Caco-2 (cell line): ENCODE measurements at regions of chr20 and their contacts with region 1.

Region 1: DNA sequence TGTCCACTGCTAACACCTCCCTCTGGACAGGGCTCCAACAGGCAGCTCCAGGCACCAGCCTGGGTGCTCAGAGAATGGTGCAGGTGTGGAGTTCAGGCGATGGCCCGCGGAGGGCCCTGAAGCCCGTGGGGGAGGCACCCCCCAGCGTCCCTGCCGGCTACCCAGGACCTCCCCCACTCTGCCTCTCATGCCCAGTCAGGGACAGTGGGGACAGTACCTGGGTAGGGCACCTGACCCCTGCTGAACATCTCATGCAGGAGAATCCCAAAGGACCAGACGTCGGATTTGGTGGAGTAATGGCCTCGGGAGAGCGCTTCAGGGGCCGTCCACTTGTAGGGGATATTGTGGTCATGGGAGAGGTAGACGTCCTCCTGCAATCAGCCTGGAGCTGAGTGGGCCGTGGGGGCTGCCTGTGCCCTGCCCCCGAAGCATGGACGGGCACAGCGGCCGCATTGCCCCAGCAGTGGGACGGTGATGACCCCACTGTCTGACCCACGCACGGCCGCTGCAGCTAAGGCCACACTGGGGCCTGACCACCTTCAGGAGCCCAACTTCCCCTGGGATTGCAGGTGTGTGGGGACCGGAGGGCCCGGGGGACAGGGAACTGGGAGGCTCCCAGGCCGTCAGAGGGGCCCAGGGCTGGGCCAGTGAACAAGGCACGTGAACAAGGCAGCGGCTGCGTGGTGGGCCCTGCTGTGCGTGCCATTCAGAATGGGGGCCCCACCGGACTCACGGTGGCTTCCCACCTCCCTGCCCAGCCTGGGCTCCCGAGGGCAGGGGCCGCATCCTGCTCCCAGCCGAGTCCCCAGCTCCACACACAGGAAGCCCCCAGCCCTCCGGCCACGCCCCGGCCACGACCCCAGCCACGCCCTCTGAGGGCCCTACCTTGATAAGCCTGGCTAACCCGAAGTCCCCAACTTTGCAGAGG is 7.1 kb downstream of the PTK6 start:
- DNase-seq: no peak
- H3K4me3 ChIP-seq: no peak overlapping the region
- H3K4me3 Mint-ChIP-seq: no peak overlapping the region
- H3K27ac Mint-ChIP-seq: no peak overlapping the region
- H3K4me1 ChIP-seq: peaks cover 27% of the 10 kb centered on the region
- H3K4me1 Mint-ChIP-seq: no peaks in the 10 kb centered on the region
- H3K27me3 ChIP-seq: no peaks in the 10 kb centered on the region
- H3K27me3 Mint-ChIP-seq: no peaks in the 10 kb centered on the region
- CTCF ChIP-seq: no peak

Region 2: DNA sequence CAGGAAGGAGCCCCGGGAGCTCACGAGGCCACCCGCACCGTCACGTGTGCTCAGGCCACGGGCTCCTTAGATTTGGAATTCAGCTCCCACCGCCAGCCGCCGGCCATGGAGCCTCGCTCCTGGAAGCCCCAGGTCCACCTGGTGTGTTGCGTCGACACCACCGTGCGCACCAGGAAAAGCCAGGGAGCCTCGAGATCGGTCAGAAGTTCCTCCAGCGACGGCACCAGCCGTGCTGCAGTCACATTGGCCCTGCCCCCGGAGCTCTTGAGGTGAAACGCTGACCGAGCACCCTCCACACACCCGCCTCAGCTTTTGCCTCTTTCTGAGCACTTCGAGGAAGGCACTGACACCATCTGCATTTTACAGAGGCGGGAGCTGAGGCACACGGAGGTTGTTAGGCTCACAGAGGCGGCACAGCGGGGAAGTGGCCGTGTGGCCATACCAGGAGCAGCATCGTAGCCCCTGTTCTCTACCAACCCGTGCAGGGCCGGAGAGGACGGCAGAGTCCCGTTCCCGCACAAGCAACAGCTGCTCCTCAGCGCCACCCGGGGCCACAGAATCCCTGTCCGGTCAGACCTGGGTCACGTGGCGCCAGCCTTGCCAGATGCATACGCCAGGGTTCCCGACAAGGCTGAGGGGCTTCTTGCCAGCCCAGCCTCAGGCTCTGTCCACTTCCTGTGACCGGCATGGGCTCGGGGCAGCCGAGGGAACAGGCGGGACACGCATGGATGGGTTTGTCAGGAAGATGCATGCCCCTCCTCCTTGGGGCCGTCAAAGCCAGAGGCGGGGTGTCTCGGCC is 283.4 kb before region 1 on chr20:
- CTCF ChIA-PET with region 1: no interaction called
- POLR2A ChIA-PET with region 1: no interaction called
- intact Hi-C with region 1: no loop called
- DNase-seq: no peak
- H3K4me3 ChIP-seq: no peak overlapping the region
- H3K4me3 Mint-ChIP-seq: no peak overlapping the region
- H3K27ac Mint-ChIP-seq: no peak overlapping the region
- H3K4me1 ChIP-seq: peaks cover 42% of the 10 kb centered on the region
- H3K4me1 Mint-ChIP-seq: peaks cover 24% of the 10 kb centered on the region
- H3K27me3 ChIP-seq: no peaks in the 10 kb centered on the region
- H3K27me3 Mint-ChIP-seq: no peaks in the 10 kb centered on the region
- CTCF ChIP-seq: no peak

Region 3: DNA sequence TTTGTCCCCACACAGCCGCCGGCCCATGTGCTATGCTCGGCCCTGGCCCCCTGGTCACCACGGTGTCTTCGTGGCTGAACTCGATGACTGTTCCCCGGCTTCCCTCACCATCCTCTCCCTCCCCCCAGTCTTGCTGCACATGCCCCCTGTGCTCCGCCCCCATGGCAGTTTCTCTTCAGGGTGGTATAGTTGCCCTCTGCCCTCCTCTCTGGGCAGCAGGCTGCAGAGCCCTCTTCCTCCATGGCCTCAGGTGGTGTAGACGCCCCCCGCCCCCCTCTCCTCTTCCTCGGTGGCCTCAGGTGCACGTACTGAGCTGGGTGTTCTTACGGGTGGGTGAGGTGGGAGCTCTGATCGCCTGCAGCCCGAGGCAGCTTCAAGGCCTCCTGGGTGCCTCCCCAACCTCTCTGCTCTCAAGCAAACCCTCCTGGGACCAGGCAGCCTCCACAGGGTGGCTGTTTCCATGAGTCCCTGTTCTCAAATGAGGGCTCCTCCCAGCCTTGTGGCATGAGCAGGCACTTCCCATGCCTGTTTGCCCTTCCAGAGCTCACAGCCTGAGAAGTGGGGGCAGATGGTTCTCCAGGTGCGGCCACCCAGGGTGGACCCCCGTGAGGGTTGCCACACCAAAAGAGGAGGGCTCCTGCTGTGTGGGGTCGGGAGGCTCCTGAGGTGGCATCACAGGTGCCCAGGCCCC is 212.4 kb before region 1 on chr20:
- CTCF ChIA-PET with region 1: no interaction called
- POLR2A ChIA-PET with region 1: interaction called, 10 read pairs
- intact Hi-C with region 1: no loop called
- DNase-seq: peak in 1 of 2 experiments; percentile 56
- H3K4me3 ChIP-seq: no peak overlapping the region
- H3K4me3 Mint-ChIP-seq: no peak overlapping the region
- H3K27ac Mint-ChIP-seq: no peak overlapping the region
- H3K4me1 ChIP-seq: peaks cover 5% of the 10 kb centered on the region; the same call in 1 of the 2 replicates
- H3K4me1 Mint-ChIP-seq: no peaks in the 10 kb centered on the region
- H3K27me3 ChIP-seq: peaks cover 1% of the 10 kb centered on the region; the same call in 1 of the 2 replicates
- H3K27me3 Mint-ChIP-seq: no peaks in the 10 kb centered on the region
- CTCF ChIP-seq: no peak

Region 4: GRCh38 chr20:63402184-63402859 is 127.8 kb before region 1 on chr20:
- CTCF ChIA-PET with region 1: no interaction called
- POLR2A ChIA-PET with region 1: no interaction called
- intact Hi-C with region 1: no loop called
- DNase-seq: no peak
- H3K4me3 ChIP-seq: no peak overlapping the region
- H3K4me3 Mint-ChIP-seq: no peak overlapping the region
- H3K27ac Mint-ChIP-seq: no peak overlapping the region
- H3K4me1 ChIP-seq: no peaks in the 10 kb centered on the region
- H3K4me1 Mint-ChIP-seq: no peaks in the 10 kb centered on the region
- H3K27me3 ChIP-seq: peaks cover 5% of the 10 kb centered on the region
- H3K27me3 Mint-ChIP-seq: peaks cover 38% of the 10 kb centered on the region
- CTCF ChIP-seq: no peak

Region 5: DNA sequence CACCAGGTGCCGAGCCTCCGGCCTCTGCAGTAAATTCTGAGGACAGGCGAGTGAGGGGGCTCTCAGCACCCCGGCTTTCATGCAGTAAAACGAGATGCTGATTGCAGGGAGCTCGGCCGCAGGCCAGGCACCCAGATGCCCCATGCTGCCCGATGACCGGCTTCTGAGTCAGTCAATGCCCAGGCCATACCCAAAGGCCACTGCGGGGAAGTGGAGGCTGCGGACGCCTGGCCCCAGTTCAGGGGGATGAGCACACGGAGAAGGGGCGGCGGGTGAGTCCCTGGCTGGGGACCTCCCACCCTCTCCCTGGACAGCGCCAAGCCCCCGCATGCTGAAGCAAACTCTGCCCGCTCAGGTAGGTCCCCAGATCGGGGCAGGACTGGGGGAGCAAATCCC is 18.0 kb after region 1 on chr20:
- CTCF ChIA-PET with region 1: no interaction called
- POLR2A ChIA-PET with region 1: no interaction called
- intact Hi-C with region 1: no loop called
- DNase-seq: no peak
- H3K4me3 ChIP-seq: no peak overlapping the region
- H3K4me3 Mint-ChIP-seq: no peak overlapping the region
- H3K27ac Mint-ChIP-seq: no peak overlapping the region
- H3K4me1 ChIP-seq: peaks cover 28% of the 10 kb centered on the region
- H3K4me1 Mint-ChIP-seq: peaks cover 22% of the 10 kb centered on the region
- H3K27me3 ChIP-seq: no peaks in the 10 kb centered on the region
- H3K27me3 Mint-ChIP-seq: no peaks in the 10 kb centered on the region
- CTCF ChIP-seq: no peak

Region 6: DNA sequence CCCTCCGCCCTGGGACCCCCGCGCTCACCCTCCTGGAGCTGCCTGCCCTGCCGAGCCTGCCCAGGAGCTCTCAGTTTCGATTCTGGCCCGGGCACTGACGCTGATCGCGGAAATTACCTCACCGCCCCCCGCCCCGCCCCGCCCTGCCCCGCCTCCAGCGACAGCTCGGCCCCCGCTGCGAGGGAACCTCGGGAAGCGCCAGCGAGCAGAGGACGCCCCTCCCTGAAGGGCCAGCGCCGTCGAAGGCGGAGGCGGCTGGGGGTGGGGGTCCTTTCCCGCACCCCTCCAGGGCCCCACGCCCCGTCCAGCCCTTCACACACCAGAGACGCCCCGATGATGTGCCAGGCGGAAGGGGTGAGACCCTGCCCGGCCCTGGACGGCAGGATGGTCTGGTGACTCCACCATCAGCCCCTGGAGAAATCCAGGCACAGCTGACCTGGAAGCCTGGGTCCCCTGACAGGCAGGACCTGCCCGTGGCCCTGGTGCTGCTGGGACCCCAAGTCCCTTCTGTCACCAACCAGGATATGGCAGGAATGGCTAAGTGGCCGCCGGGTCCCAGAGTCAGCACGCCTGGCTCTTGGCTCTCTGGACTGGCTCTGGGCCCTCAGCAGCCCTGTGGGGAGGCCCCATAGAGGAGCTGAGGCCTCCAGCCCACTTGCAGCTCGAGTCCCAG is 44.2 kb after region 1 on chr20 and contains the start of gene HELZ2:
- CTCF ChIA-PET with region 1: interaction called, 3 read pairs
- POLR2A ChIA-PET with region 1: interaction called, 11 read pairs
- intact Hi-C with region 1: loop called (anchors 5 kb)
- DNase-seq: peak; percentile 82 to 85
- H3K4me3 ChIP-seq: peak within 1 kb of the TSS; percentile 91
- H3K4me3 Mint-ChIP-seq: peak within 1 kb of the TSS; percentile 76
- H3K27ac Mint-ChIP-seq: peak within 1 kb of the TSS; percentile 83
- H3K4me1 ChIP-seq: peaks cover 15% of the 10 kb centered on the region
- H3K4me1 Mint-ChIP-seq: no peaks in the 10 kb centered on the region
- H3K27me3 ChIP-seq: no peaks in the 10 kb centered on the region
- H3K27me3 Mint-ChIP-seq: peaks cover 3% of the 10 kb centered on the region
- CTCF ChIP-seq: no peak
- total RNA-seq, gene HELZ2: 35.2 and 36.5 TPM in 2 replicates